ENCODE measurements at regions of chr17 and their contacts with region 1.

Region 1: DNA sequence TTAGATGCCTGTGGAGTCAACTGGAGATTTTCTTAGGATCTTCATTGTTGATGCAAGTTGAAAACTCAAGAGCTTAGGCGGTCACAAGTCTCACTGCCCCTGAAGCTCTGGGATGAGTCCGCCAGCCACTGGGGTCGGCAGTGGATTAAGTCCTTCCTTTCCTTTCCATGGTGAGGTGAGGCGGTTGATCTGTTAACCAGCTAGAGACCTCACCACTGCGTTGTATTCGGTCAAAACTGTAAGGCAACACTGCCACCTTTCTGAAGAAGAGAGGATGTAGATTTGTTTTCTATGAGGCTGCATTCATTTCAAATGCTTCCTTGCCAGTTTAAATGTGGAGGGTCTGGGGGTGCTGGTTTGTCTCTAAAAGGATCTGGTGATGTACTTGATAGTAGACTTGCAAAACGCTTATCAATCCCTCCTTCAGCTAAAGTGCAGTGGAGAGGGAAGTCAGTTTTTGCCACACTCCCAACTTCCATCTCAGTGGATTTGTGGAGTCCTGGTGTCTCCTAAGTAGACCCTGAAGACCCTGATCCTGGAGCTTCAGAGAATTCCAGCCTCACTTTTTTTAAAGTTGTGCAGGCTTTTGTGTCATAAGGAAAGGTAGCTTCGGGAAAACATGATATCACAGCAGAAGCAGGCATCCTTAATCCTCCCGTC is 1.7 kb downstream of the MYOCD start:
- DNase-seq: peak; percentile 30
- H3K4me3 ChIP-seq: peak overlapping the region; percentile 60 to 65
- H3K27ac ChIP-seq: peak overlapping the region; percentile 63 to 89
- H3K4me1 ChIP-seq: peaks cover 5% of the 10 kb centered on the region
- H3K27me3 ChIP-seq: no peaks in the 10 kb centered on the region
- CTCF ChIP-seq: peak; percentile 31 to 64 (median 45)
- POLR2A ChIP-seq: no peak

Region 2: DNA sequence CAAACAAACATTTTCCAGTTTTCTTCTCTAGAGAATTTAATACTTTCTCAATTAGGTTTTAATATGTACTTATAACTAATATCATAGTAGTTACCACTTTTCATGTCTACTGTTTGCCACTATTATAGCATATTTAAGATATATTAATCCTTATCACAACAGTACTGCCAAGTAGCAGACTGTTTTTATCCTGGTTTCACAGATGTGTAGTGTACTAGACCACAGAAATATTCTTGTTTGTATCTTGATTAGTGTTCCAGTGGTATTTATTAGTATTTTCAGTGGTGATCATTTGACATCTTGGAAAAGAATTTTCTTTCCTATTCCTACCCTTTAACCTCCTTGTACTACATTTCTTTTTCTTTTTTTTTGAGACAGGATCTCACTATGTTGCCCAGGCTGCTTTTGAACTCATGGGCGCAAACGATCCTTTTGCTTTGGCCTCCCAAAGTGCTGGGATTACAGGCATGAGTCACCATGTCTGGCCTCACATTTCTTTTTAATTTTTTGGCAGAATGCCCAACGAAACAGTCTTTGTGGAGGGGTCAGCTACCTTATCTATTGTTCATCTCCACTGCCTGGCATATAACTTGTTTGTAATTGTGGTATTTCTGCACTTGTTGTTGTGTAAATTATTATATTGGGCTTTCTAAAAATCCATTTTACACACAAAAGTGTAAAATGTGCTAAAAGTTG is 619.6 kb before region 1 on chr17:
- intact Hi-C with region 1: no loop called
- DNase-seq: no peak
- H3K4me3 ChIP-seq: no peak overlapping the region
- H3K27ac ChIP-seq: no peak overlapping the region
- H3K4me1 ChIP-seq: peaks cover 3% of the 10 kb centered on the region
- H3K27me3 ChIP-seq: no peaks in the 10 kb centered on the region
- CTCF ChIP-seq: no peak
- POLR2A ChIP-seq: no peak

Region 3: DNA sequence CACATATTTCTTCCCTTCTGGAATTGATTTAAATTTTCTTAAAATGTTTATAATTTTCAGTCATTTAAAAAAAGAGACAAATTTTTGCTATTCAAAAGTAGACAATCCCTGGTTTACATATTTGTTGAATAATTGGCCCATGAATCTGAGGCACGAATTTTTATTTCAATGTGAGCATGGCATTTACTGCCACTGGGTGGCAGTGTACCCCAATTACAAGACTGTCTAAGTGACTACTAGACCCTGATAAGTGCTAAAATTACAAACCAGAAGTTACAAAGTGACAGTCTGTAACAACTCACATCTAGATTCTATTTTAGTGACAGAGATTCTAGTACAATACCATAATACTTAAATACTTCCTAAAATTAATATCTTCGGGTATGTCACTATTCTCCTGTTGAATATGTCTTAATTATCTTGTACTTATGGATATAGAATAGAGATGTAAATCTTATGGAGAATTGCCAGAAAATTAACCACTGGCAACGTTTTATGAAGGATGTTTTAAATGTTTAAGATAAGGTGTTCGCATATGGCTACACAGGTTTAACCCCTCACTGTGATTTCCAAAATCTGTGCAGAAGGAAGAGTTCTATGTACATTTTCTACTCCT is 410.9 kb before region 1 on chr17:
- intact Hi-C with region 1: loop called (anchors 10 kb)
- DNase-seq: peak; percentile 71
- H3K4me3 ChIP-seq: no peak overlapping the region
- H3K27ac ChIP-seq: no peak overlapping the region
- H3K4me1 ChIP-seq: no peaks in the 10 kb centered on the region
- H3K27me3 ChIP-seq: no peaks in the 10 kb centered on the region
- CTCF ChIP-seq: peak; percentile 79 to 91 (median 86)
- POLR2A ChIP-seq: no peak